ENCODE measurements at regions of chr1 and their contacts with region 1.

Region 1: GRCh38 chr1:108158893-108159453 is 41.2 kb downstream of the SLC25A24 start:
- DNase-seq: no peak

Region 2: GRCh38 chr1:106290805-106291501 is 1868.0 kb before region 1 on chr1:
- intact Hi-C with region 1: loop called in 1 of 2 experiments (anchors 10 kb)
- DNase-seq: no peak